ENCODE measurements at regions of chr3 and their contacts with region 1.

Region 1: GRCh38 chr3:24680214-24680967 is 185.7 kb upstream of the THRB start:
- DNase-seq: peak; percentile 69
- H3K4me3 ChIP-seq: no peak overlapping the region
- H3K27ac ChIP-seq: no peak overlapping the region
- H3K4me1 ChIP-seq: no peaks in the 10 kb centered on the region
- H3K27me3 ChIP-seq: no peaks in the 10 kb centered on the region
- CTCF ChIP-seq: peak; percentile 95

Region 2: GRCh38 chr3:23888617-23889228 is 791.7 kb before region 1 on chr3:
- CTCF ChIA-PET with region 1: no interaction called
- POLR2A ChIA-PET with region 1: no interaction called
- intact Hi-C with region 1: loop called (anchors 10 kb)
- DNase-seq: peak; percentile 34
- H3K4me3 ChIP-seq: no peak overlapping the region
- H3K27ac ChIP-seq: peak overlapping the region; percentile 26
- H3K4me1 ChIP-seq: no peaks in the 10 kb centered on the region
- H3K27me3 ChIP-seq: no peaks in the 10 kb centered on the region
- CTCF ChIP-seq: peak; percentile 83

Region 3: DNA sequence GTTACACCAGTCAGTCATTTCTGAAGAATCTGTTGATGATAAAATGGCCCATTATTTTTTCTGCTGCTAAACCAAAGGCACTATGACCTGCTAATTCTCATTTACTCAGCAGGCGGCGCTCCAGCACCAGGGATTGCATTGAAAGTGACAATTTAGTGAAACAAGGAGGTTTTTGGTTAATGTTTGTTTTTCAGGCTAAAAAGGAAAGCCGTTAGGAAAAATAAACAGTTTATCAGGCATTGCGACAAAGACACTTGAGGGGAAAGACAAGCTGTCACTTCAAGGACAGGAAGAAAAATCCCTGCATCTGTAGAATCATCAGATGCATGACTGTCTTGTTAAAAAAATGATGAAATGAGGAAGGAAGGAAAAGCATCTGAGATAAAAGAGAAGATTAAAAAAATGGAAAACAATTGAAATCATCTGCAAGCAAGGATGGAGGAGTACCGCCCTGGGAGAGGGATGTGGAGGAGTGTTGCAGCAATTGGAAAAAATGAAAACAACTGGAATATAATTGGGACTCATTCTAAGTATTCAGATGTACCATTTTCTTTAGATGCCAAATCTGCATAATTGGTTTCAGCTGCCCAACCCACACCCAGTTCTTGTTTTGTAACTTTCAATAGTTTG is 681.3 kb before region 1 on chr3:
- CTCF ChIA-PET with region 1: no interaction called
- POLR2A ChIA-PET with region 1: no interaction called
- intact Hi-C with region 1: loop called (anchors 1 kb)
- DNase-seq: peak; percentile 82
- H3K4me3 ChIP-seq: no peak overlapping the region
- H3K27ac ChIP-seq: no peak overlapping the region
- H3K4me1 ChIP-seq: peaks cover 8% of the 10 kb centered on the region
- H3K27me3 ChIP-seq: no peaks in the 10 kb centered on the region
- CTCF ChIP-seq: peak; percentile 96

Region 4: DNA sequence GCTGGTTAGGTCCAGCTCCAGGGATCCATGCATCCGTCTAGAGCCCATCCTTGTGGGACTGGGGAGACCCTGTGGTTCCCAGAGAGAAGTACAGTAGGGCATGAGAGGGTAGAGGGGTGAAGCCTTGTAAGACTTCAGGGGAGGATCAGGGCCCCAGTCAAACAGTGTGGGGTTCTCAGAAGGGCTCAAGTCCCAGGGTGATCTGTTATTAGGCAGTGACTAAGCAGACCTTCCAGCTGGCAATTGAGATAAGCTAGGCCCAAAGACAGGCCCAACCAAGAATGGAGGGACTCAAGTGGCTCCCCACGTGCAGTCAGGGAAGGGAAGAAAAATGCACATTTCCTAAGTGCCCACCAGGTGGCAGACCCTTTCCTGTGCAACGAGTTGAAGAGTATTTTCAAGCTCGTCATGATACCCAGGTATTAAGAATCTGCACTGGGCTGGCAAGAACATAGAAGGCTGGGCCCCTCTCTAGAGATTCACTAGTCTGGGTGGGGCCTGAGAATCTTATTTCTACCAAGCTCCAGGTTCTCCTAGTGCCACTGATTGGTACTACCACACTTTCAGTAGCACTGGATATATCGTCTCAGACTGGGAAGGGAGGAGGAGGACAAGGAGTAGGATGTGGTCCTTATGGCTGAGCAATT is 494.5 kb before region 1 on chr3:
- CTCF ChIA-PET with region 1: no interaction called
- POLR2A ChIA-PET with region 1: no interaction called
- intact Hi-C with region 1: loop called (anchors 2 kb)
- DNase-seq: peak; percentile 80
- H3K4me3 ChIP-seq: no peak overlapping the region
- H3K27ac ChIP-seq: no peak overlapping the region
- H3K4me1 ChIP-seq: no peaks in the 10 kb centered on the region
- H3K27me3 ChIP-seq: no peaks in the 10 kb centered on the region
- CTCF ChIP-seq: peak; percentile 73

Region 5: GRCh38 chr3:24264748-24265158 is 415.6 kb before region 1 on chr3:
- CTCF ChIA-PET with region 1: no interaction called
- POLR2A ChIA-PET with region 1: no interaction called
- intact Hi-C with region 1: loop called (anchors 2 kb)
- DNase-seq: peak; percentile 66
- H3K4me3 ChIP-seq: no peak overlapping the region
- H3K27ac ChIP-seq: no peak overlapping the region
- H3K4me1 ChIP-seq: no peaks in the 10 kb centered on the region
- H3K27me3 ChIP-seq: no peaks in the 10 kb centered on the region
- CTCF ChIP-seq: peak; percentile 88

Region 6: DNA sequence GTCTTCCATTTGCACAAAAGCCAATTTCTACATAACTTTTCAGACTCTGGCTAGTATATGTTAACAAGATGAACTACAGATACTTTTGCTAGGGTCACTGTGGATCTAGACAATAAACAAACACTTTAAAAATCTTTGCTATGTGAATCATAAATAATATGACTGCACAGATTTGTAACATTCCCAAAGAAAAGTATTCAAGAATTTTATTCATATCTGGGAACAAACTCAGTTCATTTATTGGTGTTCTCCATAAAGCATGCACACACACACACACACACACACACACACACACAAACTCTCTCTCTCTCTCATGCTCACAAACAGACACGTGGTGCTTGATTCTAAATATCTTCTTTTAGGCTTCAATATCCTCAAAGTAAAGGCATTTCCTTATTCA is 166.9 kb before region 1 on chr3:
- CTCF ChIA-PET with region 1: no interaction called
- POLR2A ChIA-PET with region 1: no interaction called
- intact Hi-C with region 1: no loop called
- DNase-seq: no peak
- H3K4me3 ChIP-seq: no peak overlapping the region
- H3K27ac ChIP-seq: no peak overlapping the region
- H3K4me1 ChIP-seq: no peaks in the 10 kb centered on the region
- H3K27me3 ChIP-seq: peaks cover 9% of the 10 kb centered on the region
- CTCF ChIP-seq: no peak

Region 7: DNA sequence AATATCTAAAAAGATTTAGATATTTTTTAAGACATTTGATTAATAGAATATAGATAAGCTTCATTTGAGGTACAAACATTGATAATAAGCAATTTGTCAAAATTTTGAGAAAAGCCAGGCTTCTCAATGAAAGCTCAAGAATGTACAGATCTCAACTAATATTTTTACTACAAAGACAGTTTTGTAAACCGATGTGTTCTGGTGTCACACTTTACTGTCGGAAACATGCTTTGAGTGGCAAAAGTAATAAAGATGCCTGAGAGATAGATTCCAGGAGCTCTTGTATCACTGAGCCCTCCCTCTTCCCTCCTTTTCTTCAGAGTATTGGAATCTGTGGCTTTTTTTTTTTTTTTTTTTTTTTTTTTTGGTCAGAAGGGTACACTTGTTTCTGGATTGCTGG is 140.7 kb before region 1 on chr3:
- CTCF ChIA-PET with region 1: interaction called, 14 read pairs
- POLR2A ChIA-PET with region 1: no interaction called
- intact Hi-C with region 1: no loop called
- DNase-seq: no peak
- H3K4me3 ChIP-seq: no peak overlapping the region
- H3K27ac ChIP-seq: no peak overlapping the region
- H3K4me1 ChIP-seq: no peaks in the 10 kb centered on the region
- H3K27me3 ChIP-seq: no peaks in the 10 kb centered on the region
- CTCF ChIP-seq: no peak

Region 8: DNA sequence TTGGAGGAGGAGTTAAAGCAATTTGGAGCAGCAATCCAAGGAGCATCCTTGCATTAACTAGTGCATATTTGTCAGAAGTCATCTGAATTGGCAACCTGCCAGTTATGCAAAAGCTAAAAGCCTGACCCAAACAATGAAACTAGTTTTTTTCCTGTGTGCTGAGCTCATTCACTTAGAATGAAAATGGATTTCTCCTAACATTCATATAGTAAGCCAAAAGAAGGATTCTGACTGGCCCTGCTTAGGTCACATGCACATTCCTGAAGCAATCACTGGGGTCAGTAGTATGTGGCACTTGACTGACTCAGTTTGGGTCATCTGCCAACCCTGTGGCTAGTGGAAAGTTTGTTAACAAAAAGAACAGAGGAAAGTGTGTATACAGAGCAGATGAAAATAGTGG is 1140.0 kb after region 1 on chr3:
- CTCF ChIA-PET with region 1: no interaction called
- POLR2A ChIA-PET with region 1: no interaction called
- intact Hi-C with region 1: no loop called
- DNase-seq: peak; percentile 74
- H3K4me3 ChIP-seq: no peak overlapping the region
- H3K27ac ChIP-seq: no peak overlapping the region
- H3K4me1 ChIP-seq: peaks cover 16% of the 10 kb centered on the region
- H3K27me3 ChIP-seq: peaks cover 55% of the 10 kb centered on the region
- CTCF ChIP-seq: no peak